Tibial artery (tissue), 4 donors: ENCODE measurements at regions of chr2 and their contacts with region 1.

Region 1: GRCh38 chr2:143205106-143205764 is 76.0 kb downstream of the ARHGAP15 start:
- DNase-seq: no peak
- H3K4me3 ChIP-seq: no peak overlapping the region
- H3K27ac ChIP-seq: no peak overlapping the region
- H3K4me1 ChIP-seq: peaks cover 0 to 21% (median 13%) of the 10 kb centered on the region in 4 donors
- H3K27me3 ChIP-seq: no peaks in the 10 kb centered on the region
- CTCF ChIP-seq: peak; percentile 27 to 36

Region 2: GRCh38 chr2:141565610-141566009 is 1639.6 kb before region 1 on chr2:
- intact Hi-C with region 1: no loop called
- DNase-seq: no peak
- H3K4me3 ChIP-seq: no peak overlapping the region
- H3K27ac ChIP-seq: no peak overlapping the region
- H3K4me1 ChIP-seq: no peaks in the 10 kb centered on the region
- H3K27me3 ChIP-seq: no peaks in the 10 kb centered on the region
- CTCF ChIP-seq: no peak

Region 3: DNA sequence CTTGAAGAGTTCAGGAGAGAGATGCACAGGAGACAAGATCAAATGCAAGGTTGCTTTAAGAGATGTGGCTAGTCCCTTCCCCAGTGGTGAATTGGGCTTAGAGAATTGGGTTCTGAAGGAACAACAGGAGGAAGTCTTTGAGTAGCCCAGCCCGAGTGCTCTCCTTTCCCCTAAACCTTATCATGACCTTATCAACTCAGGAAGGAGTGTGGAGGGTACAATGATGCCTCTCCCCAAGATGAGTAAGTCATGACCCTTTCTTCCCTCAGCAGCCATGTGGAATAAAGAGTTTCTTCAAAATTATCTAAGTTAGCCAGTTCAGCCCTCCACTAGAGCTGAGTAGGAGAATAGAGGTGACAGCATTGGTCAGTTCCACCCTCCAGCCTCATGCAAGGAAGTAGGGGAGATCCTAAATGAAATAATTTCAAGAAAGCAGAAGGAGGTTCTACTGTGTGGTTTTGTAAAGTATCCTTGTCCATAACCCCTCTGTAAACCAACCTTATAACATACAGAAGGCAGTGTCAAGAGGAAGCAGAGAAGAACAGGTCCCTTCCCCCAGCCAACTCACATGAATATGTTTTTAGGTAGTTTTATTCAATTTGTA is 12.4 kb after region 1 on chr2:
- intact Hi-C with region 1: loop called (anchors 2 kb)
- DNase-seq: no peak
- H3K4me3 ChIP-seq: no peak overlapping the region
- H3K27ac ChIP-seq: no peak overlapping the region
- H3K4me1 ChIP-seq: peaks cover 0 to 5% (median under 1%) of the 10 kb centered on the region in 4 donors
- H3K27me3 ChIP-seq: no peaks in the 10 kb centered on the region
- CTCF ChIP-seq: no peak

Region 4: DNA sequence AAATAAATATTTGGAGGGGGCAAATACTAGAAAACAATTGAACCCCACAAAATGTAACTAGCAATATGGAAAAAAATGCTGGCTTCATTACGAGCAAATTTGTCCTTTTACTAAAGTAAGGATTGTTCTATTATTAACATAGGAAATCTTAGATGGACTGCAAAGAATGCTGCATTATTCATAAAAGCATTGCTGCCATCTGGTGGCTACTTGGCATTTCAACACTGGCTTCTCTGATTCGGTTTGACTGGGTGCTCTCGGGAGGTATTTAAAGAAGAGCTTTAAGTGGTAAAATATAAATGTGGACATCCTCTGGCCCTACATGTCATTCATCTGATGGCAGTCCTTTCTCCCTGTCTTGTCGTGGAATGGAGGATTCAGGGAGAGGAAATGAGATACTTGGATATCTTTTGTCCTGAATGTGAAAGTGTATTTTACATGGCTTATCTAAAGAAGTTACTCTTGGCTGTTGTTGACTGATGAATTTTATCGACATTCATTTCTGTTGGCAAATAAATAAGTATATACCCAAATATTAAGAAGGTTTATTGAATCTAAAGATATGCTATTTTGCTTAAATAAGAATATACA is 54.2 kb after region 1 on chr2:
- intact Hi-C with region 1: loop called (anchors 10 kb)
- DNase-seq: peak; percentile 72 to 74
- H3K4me3 ChIP-seq: no peak overlapping the region
- H3K27ac ChIP-seq: no peak overlapping the region
- H3K4me1 ChIP-seq: peaks cover 0 to 6% (median 2%) of the 10 kb centered on the region in 4 donors
- H3K27me3 ChIP-seq: no peaks in the 10 kb centered on the region
- CTCF ChIP-seq: peak; percentile 71 to 74